GM10248 (cell line): ENCODE measurements at regions of chr20 and their contacts with region 1.

Region 1: DNA sequence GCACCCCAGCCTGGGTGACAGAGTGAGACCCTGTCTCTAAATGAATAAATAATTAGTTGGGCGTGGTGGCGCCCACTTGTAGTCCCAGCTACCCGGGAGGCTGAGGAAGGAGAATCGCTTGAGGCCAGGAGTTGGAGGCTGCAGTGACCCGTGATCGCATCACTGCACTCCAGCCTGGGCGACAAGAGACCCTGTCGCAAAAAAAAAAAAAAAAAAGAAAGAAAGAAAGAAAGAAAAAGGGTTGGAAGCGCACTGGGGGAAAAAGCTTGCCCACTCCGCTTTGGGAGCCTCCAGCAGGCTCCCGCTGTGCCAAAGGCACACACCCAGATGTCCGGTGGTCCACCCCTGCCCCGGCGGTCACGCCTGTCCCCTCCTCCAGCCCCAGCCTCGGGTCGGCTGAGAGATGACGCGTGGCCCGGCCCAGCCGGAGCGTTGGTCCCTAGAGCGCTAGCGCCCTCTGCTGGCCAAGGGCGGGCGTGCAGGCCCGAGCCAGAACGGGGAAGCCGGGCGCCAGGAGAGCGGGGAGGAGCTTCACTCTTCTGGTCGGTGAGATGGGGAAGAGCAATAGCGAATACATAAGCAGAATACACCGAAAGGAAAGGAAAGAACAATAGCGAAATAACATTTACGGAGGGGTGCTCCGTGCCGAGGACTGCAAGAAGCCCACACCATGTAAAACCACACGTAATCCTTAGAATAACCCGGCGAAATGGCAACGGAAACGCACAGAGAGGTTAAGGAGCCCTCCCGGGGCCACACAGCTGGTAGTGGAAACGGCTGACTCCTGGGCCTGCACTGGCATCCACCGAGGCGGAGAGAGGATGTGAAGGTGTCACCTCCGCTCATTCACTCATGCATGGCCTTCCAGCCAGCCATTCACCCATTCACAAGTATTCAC is 41.7 kb downstream of the UBE2V1 start:
- DNase-seq: peak; percentile 94
- CTCF ChIP-seq: peak; percentile 100

Region 2: DNA sequence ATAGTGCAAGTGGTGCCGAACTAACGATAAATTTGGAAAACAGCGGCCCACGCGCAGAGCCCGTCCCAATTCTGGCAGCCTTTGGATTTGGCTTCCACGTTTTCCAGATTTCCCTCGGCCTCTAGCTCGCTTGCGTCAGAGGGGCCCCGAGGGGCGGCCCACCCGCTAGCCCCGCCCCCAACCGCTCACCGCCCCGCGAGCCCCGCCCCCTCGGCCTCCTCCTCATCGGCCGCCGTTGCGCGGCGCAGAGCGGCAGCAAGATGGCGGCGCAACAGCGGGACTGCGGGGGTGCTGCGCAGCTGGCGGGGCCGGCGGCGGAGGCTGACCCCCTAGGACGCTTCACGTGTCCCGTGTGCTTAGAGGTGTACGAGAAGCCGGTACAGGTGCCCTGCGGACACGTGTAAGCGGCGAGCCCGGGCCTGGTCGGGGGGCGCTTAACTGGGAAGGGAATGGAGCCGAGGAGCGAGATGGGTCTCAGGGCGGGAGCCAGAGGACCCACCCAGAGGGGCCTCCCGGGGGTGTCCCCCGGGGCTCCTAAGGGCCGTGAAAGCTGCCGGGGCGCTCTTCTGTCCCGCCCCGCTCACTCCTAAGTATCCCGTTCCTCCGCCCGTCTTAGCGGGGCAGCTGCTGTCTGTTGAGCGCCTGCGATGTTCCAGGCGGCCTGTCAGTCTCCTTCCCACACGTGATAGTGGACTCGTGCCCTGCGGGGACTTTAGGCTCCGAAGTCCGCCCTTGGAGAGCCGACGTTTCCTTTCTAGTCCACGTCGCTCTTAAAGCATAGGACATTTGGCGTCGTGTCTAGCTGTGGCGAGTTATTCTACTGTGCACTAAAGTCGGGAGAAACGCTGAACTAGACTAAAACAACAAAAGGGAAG is 134.8 kb before region 1 on chr20 and contains the start of gene RNF114:
- CTCF ChIA-PET with region 1: interaction called, 25 read pairs
- POLR2A ChIA-PET with region 1: no interaction called
- DNase-seq: peak; percentile 99
- CTCF ChIP-seq: no peak

Region 3: GRCh38 chr20:49973995-49974394 is 97.2 kb before region 1 on chr20:
- CTCF ChIA-PET with region 1: interaction called, 331 read pairs
- POLR2A ChIA-PET with region 1: no interaction called
- DNase-seq: no peak
- CTCF ChIP-seq: no peak

Region 4: GRCh38 chr20:50003253-50003656 is 68.0 kb before region 1 on chr20:
- CTCF ChIA-PET with region 1: interaction called, 15 read pairs
- POLR2A ChIA-PET with region 1: interaction called, 3 read pairs
- DNase-seq: no peak
- CTCF ChIP-seq: no peak

Region 5: GRCh38 chr20:50044379-50044888 is 26.8 kb before region 1 on chr20:
- CTCF ChIA-PET with region 1: interaction called, 26 read pairs
- POLR2A ChIA-PET with region 1: no interaction called
- DNase-seq: no peak
- CTCF ChIP-seq: no peak

Region 6: GRCh38 chr20:50095476-50096078 is 24.3 kb after region 1 on chr20:
- CTCF ChIA-PET with region 1: interaction called, 38 read pairs
- POLR2A ChIA-PET with region 1: no interaction called
- DNase-seq: no peak
- CTCF ChIP-seq: no peak